ENCODE measurements at regions of chr6 and their contacts with region 1.

Region 1: GRCh38 chr6:80527552-80528052 is 421.1 kb downstream of the BCKDHB start:
- DNase-seq: no peak
- ATAC-seq: no peak
- H3K4me3 ChIP-seq: no peak overlapping the region
- H3K27ac ChIP-seq: no peak overlapping the region
- H3K4me1 ChIP-seq: no peaks in the 10 kb centered on the region; the same call in 1 of the 2 replicates
- H3K27me3 ChIP-seq: no peaks in the 10 kb centered on the region
- CTCF ChIP-seq: no peak

Region 2: DNA sequence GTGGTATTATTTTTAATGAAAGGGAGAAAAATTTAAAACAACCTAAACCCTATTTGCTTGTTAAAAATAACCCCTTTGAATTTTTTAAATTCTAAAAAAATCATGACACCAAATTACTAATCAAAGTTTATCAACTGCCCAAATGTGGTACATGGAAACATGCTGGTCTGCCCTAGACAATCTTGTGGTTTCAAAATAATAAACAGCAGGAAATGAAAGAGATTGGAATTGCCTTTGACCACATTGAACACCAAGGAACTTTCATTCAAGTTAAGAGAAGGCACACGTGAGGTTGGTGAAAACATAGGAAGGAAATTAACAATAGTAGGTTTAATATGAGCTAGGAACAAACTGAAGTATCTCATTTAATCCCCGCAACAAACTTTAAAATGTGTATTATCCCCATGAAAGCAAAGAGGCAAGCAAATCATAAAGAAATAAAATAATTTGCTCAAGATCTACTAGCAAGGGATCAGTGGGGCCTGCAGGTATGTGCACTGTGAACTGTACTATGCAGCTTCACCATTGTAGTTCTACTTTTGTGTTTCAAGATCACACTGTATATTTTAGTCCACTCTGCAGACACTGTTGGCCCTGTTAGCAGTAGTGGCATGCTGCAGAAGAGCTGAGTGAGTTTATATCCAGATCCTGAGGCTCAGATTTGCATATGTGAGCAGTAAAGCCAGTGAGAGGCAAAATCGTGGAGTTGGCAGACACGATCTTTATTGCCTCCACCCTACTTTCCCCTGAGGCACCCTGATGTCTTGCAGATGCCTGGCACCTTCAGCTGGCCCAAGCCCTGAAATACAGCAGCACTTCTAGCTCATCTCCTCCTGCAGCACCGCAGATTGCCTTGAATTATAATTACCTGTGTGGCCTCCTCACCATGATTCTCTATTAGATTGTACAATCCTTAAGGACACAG is 1382.6 kb after region 1 on chr6:
- CTCF ChIA-PET with region 1: no interaction called
- POLR2A ChIA-PET with region 1: no interaction called
- in situ Hi-C with region 1: no loop called
- intact Hi-C with region 1: loop called (anchors 5 kb)
- DNase-seq: no peak
- ATAC-seq: no peak
- H3K4me3 ChIP-seq: no peak overlapping the region
- H3K27ac ChIP-seq: no peak overlapping the region
- H3K4me1 ChIP-seq: no peaks in the 10 kb centered on the region
- H3K27me3 ChIP-seq: no peaks in the 10 kb centered on the region
- CTCF ChIP-seq: no peak

Measured in Panc1 (cell line).